T-cell (primary cell): ENCODE measurements at regions of chr14 and their contacts with region 1.

Region 1: DNA sequence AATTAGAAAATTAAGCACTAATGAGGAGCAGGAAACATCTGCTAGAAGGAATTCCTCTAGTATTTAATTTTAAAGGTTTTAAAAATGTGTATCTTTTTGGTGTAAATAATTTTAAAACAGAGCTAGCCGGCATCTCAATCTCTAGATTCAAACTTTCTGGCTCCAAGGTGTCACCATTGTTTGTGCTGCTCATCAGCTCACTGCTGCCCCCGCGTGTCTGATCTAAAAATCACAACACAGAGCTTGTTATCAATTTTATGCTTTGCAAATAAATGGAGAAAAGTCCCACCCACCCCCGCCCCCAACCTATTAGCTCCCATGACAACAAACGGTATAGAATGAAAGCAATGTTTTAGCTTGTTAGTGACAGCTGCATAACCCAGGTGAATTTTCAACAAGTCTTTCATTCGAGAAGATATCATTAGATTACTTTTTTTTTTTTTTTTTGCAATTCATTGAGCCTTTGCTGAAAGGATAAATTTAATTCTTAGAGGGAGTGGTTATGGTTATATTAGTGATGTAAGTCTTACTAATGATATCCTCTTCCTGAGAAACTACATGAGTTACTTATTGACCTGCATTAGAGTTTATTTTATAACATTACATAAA is 11.3 kb upstream of the ABHD12B start:
- DNase-seq: peak; percentile 72 to 93 (median 87)
- ATAC-seq: peak; percentile 68 to 80 (median 78)
- H3K4me3 ChIP-seq: peak overlapping the region; percentile 55 to 70
- H3K4me3 Mint-ChIP-seq: peak overlapping the region; percentile 87 to 93 (median 93)
- H3K27ac ChIP-seq: no peak overlapping the region
- H3K27ac Mint-ChIP-seq: peak overlapping the region; percentile 84 to 91
- H3K4me1 ChIP-seq: peaks cover 4 to 8% of the 10 kb centered on the region in 2 experiments
- H3K4me1 Mint-ChIP-seq: peaks cover 8 to 16% (median 15%) of the 10 kb centered on the region in 3 donors
- H3K27me3 ChIP-seq: no peaks in the 10 kb centered on the region
- H3K27me3 Mint-ChIP-seq: peaks cover 0 to 3% of the 10 kb centered on the region in 2 donors

Region 2: DNA sequence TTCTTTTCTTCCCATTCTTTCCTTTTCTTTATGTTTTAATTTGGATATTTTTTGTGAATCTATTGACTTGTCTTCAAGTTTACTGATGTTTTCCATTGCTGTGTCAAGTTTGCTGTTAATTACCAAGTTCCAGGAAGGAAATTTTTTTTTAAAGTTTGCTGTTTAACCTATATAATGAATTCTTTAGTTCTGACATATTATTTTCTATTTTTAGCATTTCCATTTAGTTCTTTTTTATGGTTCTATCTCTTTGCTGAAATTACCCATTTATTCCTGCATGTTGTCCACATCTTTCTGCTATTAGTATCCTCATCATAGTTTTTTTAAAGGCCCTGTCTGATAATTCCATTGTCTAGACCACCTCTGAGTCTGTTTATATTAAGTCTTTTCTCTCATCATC is 1139.8 kb before region 1 on chr14:
- CTCF ChIA-PET with region 1: no interaction called
- POLR2A ChIA-PET with region 1: no interaction called
- DNase-seq: no peak
- ATAC-seq: no peak
- H3K4me3 ChIP-seq: no peak overlapping the region
- H3K4me3 Mint-ChIP-seq: no peak overlapping the region
- H3K27ac ChIP-seq: no peak overlapping the region
- H3K27ac Mint-ChIP-seq: no peak overlapping the region
- H3K4me1 ChIP-seq: no peaks in the 10 kb centered on the region
- H3K4me1 Mint-ChIP-seq: no peaks in the 10 kb centered on the region
- H3K27me3 ChIP-seq: no peaks in the 10 kb centered on the region
- H3K27me3 Mint-ChIP-seq: no peaks in the 10 kb centered on the region

Region 3: GRCh38 chr14:50542941-50543418 is 317.6 kb before region 1 on chr14:
- CTCF ChIA-PET with region 1: interaction called, 12 to 19 read pairs
- POLR2A ChIA-PET with region 1: interaction called in 1 of 2 experiments, 3 read pairs
- DNase-seq: peak in 24 of 35 experiments; percentile 1 to 69 (median 23)
- ATAC-seq: peak; percentile 58 to 72 (median 64)
- H3K4me3 ChIP-seq: no peak overlapping the region
- H3K4me3 Mint-ChIP-seq: no peak overlapping the region
- H3K27ac ChIP-seq: no peak overlapping the region
- H3K27ac Mint-ChIP-seq: no peak overlapping the region
- H3K4me1 ChIP-seq: peaks cover 0 to 4% of the 10 kb centered on the region in 2 experiments
- H3K4me1 Mint-ChIP-seq: peaks cover 13 to 19% (median 14%) of the 10 kb centered on the region in 3 donors
- H3K27me3 ChIP-seq: no peaks in the 10 kb centered on the region
- H3K27me3 Mint-ChIP-seq: no peaks in the 10 kb centered on the region

Region 4: GRCh38 chr14:50773632-50774541 is 86.7 kb before region 1 on chr14:
- CTCF ChIA-PET with region 1: interaction called, 54 to 132 read pairs
- POLR2A ChIA-PET with region 1: interaction called, 5 to 6 read pairs
- DNase-seq: peak in 10 of 35 experiments; percentile 5 to 49 (median 18)
- ATAC-seq: peak in 2 of 4 experiments; percentile 35 to 63
- H3K4me3 ChIP-seq: no peak overlapping the region
- H3K4me3 Mint-ChIP-seq: no peak overlapping the region
- H3K27ac ChIP-seq: no peak overlapping the region
- H3K27ac Mint-ChIP-seq: peak overlapping the region; percentile 11 to 80
- H3K4me1 ChIP-seq: peaks cover 2 to 15% of the 10 kb centered on the region in 2 experiments
- H3K4me1 Mint-ChIP-seq: peaks cover 21 to 27% (median 24%) of the 10 kb centered on the region in 3 donors
- H3K27me3 ChIP-seq: no peaks in the 10 kb centered on the region
- H3K27me3 Mint-ChIP-seq: no peaks in the 10 kb centered on the region

Region 5: DNA sequence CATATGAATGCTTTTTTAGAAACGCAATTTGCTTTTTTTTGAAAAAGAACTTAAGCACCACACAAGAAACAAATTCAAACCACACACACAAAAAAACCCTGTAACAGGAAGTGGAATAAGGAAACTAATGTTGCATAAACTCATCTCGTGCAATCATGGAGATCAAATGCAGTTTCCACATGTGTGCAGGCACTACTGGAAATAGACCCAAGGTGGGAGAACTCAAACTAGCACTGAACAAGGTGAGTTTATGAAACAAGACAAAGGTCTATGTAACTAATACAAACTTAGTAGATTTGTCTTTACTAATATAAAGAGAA is 47.1 kb before region 1 on chr14:
- CTCF ChIA-PET with region 1: interaction called, 9 to 10 read pairs
- POLR2A ChIA-PET with region 1: interaction called in 1 of 2 experiments, 4 read pairs
- DNase-seq: peak in 2 of 35 experiments; percentile 13 to 69
- ATAC-seq: peak; percentile 83 to 93 (median 87)
- H3K4me3 ChIP-seq: peak overlapping the region; percentile 6 to 19
- H3K4me3 Mint-ChIP-seq: peak overlapping the region; percentile 61 to 79 (median 77)
- H3K27ac ChIP-seq: peak overlapping the region; percentile 66
- H3K27ac Mint-ChIP-seq: peak overlapping the region; percentile 95 to 98
- H3K4me1 ChIP-seq: peaks cover 31 to 32% of the 10 kb centered on the region in 2 experiments
- H3K4me1 Mint-ChIP-seq: peaks cover 65% of the 10 kb centered on the region in 3 donors
- H3K27me3 ChIP-seq: no peaks in the 10 kb centered on the region
- H3K27me3 Mint-ChIP-seq: no peaks in the 10 kb centered on the region

Region 6: DNA sequence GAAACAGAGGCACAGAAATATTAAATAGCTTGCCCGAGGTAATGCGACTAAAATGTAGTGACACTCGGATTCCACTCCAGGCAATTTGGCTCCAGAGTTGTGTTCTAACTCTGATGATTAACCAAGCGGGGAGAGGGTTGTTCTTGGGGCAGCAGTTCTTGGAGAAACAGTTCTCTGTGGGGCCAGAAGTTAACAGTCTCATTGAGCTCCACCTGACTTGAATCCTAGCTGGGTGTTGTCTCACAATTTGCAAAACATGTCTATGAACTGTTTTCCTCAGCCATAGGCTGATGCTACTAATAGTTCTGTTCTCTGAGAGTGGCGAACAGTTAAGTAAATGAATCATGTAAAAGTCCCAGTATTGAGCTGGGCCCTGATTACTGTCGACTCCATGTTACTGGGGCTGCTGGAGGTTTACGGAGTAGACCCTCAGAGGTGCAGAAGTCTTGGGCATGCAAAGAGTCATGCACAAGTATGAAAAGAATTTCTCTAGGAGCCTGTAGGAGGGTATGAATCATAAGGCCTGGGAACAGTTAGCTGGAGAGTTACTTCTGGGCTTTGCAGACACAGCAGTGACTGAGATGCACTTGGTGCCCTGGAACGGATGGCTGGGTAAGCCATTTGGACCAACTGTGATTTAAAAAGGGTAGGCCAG is 14.2 kb before region 1 on chr14:
- CTCF ChIA-PET with region 1: interaction called, 5 to 16 read pairs
- POLR2A ChIA-PET with region 1: no interaction called
- DNase-seq: no peak
- ATAC-seq: no peak
- H3K4me3 ChIP-seq: no peak overlapping the region
- H3K4me3 Mint-ChIP-seq: no peak overlapping the region
- H3K27ac ChIP-seq: no peak overlapping the region
- H3K27ac Mint-ChIP-seq: no peak overlapping the region
- H3K4me1 ChIP-seq: no peaks in the 10 kb centered on the region
- H3K4me1 Mint-ChIP-seq: peaks cover 2 to 9% (median 3%) of the 10 kb centered on the region in 3 donors
- H3K27me3 ChIP-seq: no peaks in the 10 kb centered on the region
- H3K27me3 Mint-ChIP-seq: no peaks in the 10 kb centered on the region

Region 7: DNA sequence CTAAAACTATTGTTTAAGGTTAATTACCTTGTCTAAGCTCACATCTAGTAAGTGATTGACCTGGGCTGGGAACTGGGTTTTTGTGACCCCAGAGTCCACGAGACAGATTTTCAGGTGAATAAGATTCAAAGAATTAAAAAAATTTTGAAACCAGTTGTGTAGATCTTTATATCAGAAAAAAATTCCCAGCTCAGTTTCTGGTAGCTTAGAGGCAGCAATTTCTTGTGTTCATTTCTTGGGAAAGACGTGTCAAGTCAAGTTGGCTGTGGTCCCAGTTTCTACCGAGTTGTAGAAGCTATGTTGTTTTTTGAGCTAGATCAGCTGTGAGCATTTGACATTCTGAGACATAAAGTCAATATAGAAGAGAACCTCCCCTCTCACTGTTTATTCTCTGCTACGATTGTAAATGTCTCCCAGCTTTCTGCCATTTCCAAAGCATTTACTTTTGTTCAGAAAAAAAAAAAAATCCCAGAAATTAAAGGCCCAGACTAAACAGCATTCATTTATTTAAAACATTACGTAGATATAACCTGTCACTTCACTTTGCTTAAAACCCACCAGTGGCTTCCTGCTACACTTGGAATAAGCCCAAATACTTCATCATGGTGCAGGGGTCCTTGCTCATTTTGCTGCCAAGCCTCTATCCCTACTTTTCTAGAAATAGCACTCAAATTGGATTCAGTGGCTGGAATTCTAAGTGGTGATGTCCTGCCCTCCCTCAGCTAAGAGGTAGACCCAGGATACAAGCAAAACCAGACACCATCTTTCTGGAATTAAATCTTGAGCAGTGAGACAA is 104.2 kb after region 1 on chr14:
- CTCF ChIA-PET with region 1: no interaction called
- POLR2A ChIA-PET with region 1: no interaction called
- DNase-seq: no peak
- ATAC-seq: no peak
- H3K4me3 ChIP-seq: no peak overlapping the region
- H3K4me3 Mint-ChIP-seq: no peak overlapping the region
- H3K27ac ChIP-seq: no peak overlapping the region
- H3K27ac Mint-ChIP-seq: no peak overlapping the region
- H3K4me1 ChIP-seq: no peaks in the 10 kb centered on the region
- H3K4me1 Mint-ChIP-seq: peaks cover 0 to 4% (median 0%) of the 10 kb centered on the region in 3 donors
- H3K27me3 ChIP-seq: peaks cover 0 to 5% of the 10 kb centered on the region in 2 experiments
- H3K27me3 Mint-ChIP-seq: peaks cover 7 to 8% of the 10 kb centered on the region in 2 donors

Region 8: DNA sequence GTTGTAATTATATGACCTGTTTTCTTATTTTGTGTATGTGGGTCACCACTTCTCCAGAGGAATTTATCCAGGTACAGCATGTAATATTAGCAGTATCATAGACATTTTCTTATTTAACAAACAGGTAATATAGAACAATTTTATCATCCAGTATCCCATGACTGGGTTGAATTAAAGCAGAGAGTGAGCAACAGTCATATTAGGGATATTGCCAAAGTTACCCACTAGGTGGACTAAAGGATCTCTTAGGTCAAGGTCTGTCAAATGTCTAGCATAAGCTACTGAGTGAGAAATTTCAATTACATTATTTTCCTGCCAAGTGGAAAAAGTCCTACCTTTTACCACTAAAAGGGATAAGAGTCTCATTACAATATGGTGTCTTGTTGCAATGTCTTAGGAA is 296.4 kb after region 1 on chr14:
- CTCF ChIA-PET with region 1: no interaction called
- POLR2A ChIA-PET with region 1: no interaction called
- DNase-seq: peak in 1 of 35 experiments; percentile 10
- ATAC-seq: no peak
- H3K4me3 ChIP-seq: no peak overlapping the region
- H3K4me3 Mint-ChIP-seq: no peak overlapping the region
- H3K27ac ChIP-seq: no peak overlapping the region
- H3K27ac Mint-ChIP-seq: no peak overlapping the region
- H3K4me1 ChIP-seq: no peaks in the 10 kb centered on the region
- H3K4me1 Mint-ChIP-seq: no peaks in the 10 kb centered on the region
- H3K27me3 ChIP-seq: no peaks in the 10 kb centered on the region
- H3K27me3 Mint-ChIP-seq: no peaks in the 10 kb centered on the region